H1 (cell line): ENCODE measurements at regions of chr6 and their contacts with region 1.

Region 1: DNA sequence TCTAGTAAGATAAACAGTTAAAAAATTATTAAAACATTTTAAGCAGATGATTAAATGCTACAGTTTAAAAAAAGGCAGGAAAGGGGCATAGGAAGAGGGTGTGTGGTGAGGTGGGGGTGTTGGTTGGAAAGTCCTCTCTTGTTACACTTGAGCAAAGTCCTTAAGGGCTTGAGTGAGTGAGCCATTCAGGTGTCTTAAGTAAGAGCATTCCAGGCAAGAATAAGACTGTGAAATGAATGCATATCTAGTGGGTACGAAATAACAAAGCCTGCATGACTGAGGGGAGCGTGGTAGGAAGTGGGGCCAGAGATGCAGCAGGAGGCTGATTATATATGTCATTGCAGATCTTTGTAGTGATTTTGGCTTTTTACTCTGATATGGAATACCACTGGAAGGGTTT is 5.1 kb downstream of the CDKAL1 start:
- DNase-seq: no peak
- H3K4me3 ChIP-seq: no peak overlapping the region
- H3K27ac ChIP-seq: no peak overlapping the region
- H3K4me1 ChIP-seq: no peaks in the 10 kb centered on the region; a peak in 1 of 7 replicates
- H3K27me3 ChIP-seq: no peaks in the 10 kb centered on the region
- CTCF ChIP-seq: no peak
- EP300 ChIP-seq: no peak
- POLR2A ChIP-seq: no peak
- RAD21 ChIP-seq: no peak

Region 2: GRCh38 chr6:20554326-20554725 is 14.9 kb after region 1 on chr6:
- CTCF ChIA-PET with region 1: interaction called, 11 read pairs
- POLR2A ChIA-PET with region 1: interaction called, 6 read pairs
- DNase-seq: no peak
- H3K4me3 ChIP-seq: no peak overlapping the region
- H3K27ac ChIP-seq: no peak overlapping the region
- H3K4me1 ChIP-seq: no peaks in the 10 kb centered on the region
- H3K27me3 ChIP-seq: no peaks in the 10 kb centered on the region
- CTCF ChIP-seq: no peak
- EP300 ChIP-seq: no peak
- POLR2A ChIP-seq: no peak
- RAD21 ChIP-seq: no peak

Region 3: GRCh38 chr6:20978151-20978614 is 438.8 kb after region 1 on chr6:
- CTCF ChIA-PET with region 1: no interaction called
- POLR2A ChIA-PET with region 1: no interaction called
- DNase-seq: no peak
- H3K4me3 ChIP-seq: no peak overlapping the region
- H3K27ac ChIP-seq: no peak overlapping the region
- H3K4me1 ChIP-seq: no peaks in the 10 kb centered on the region
- H3K27me3 ChIP-seq: no peaks in the 10 kb centered on the region
- CTCF ChIP-seq: no peak
- EP300 ChIP-seq: no peak
- POLR2A ChIP-seq: no peak
- RAD21 ChIP-seq: no peak